Activated B cell treated with CpG ODN at 0.5 μM for 24 hours (primary cell): ENCODE measurements at regions of chr17 and their contacts with region 1.

Region 1: GRCh38 chr17:68771867-68772515 is 170.8 kb upstream of the FAM20A start:
- DNase-seq: no peak
- ATAC-seq: peak; percentile 79
- H3K4me3 Mint-ChIP-seq: peak overlapping the region; percentile 70
- H3K27ac Mint-ChIP-seq: peak overlapping the region; percentile 69
- H3K4me1 Mint-ChIP-seq: peaks cover 20% of the 10 kb centered on the region
- H3K27me3 Mint-ChIP-seq: no peaks in the 10 kb centered on the region
- CTCF ChIP-seq: peak; percentile 17

Region 2: DNA sequence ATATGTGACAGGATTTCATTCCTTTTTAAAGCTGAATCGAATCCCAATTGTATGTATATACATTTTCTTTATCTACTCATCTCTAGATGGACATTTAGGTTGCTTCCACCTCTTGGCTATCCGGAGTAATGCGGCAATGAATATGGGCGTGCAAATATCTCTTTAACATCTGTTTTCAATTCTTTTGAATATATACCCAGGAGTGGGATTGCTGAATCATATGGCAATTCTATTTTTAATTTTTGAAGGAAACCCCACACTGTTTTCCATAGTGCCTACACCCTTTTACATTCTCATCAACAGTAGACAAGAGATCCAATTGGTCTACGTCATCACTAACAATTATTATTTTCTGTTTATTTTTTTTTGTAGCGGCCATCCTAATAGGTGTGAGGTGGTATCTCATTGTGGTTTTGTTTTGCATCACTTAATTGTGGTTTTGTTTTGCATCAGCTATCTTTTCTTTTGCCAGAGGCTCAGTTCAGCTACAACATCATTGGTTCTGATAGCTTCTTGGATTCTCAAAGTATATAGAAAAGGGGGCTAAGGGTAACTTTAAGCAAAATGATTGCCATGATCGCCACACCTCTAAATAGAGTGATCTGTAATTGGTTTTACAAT is 616.9 kb after region 1 on chr17:
- CTCF ChIA-PET with region 1: no interaction called
- POLR2A ChIA-PET with region 1: no interaction called
- intact Hi-C with region 1: loop called (anchors 1 kb)
- DNase-seq: no peak
- ATAC-seq: no peak
- H3K4me3 Mint-ChIP-seq: no peak overlapping the region
- H3K27ac Mint-ChIP-seq: no peak overlapping the region
- H3K4me1 Mint-ChIP-seq: no peaks in the 10 kb centered on the region
- H3K27me3 Mint-ChIP-seq: peaks cover 17% of the 10 kb centered on the region
- CTCF ChIP-seq: no peak